ENCODE measurements at regions of chr3 and their contacts with region 1.

Region 1: GRCh38 chr3:79497447-79498111 is 270.2 kb downstream of the ROBO1 start:
- DNase-seq: no peak
- H3K4me3 ChIP-seq: no peak overlapping the region
- H3K27ac ChIP-seq: no peak overlapping the region
- H3K4me1 ChIP-seq: no peaks in the 10 kb centered on the region
- H3K27me3 ChIP-seq: no peaks in the 10 kb centered on the region
- CTCF ChIP-seq: peak; percentile 84

Region 2: DNA sequence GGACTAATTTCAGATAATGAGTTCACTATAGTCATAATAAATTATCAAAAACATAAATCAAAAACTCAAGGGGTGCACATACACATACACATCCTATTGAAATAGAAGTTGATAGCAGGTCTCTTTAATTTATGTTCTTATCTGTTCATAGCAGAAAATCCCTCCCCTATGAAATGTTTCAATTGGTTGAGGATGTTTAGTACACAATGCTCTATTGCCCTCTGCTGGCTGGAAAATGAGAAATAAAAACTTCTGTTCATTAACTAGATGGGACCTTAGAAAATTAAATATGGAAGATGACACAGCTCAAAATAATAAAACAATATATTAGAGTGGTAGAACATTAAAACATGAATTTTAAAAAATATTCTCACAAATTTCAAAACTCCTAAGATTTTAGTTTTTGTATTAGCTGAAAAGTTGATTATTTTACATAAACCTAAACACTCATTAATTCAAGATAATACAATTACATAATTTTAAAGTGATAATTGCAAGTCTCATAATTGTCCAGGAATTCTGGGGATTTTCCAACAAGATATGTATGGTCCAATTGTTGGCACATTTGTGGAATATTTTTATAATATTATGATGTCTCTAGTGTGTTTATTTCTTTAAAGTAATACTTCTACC is 464.8 kb before region 1 on chr3:
- CTCF ChIA-PET with region 1: no interaction called
- POLR2A ChIA-PET with region 1: no interaction called
- intact Hi-C with region 1: loop called (anchors 2 kb)
- DNase-seq: no peak
- H3K4me3 ChIP-seq: no peak overlapping the region
- H3K27ac ChIP-seq: no peak overlapping the region
- H3K4me1 ChIP-seq: no peaks in the 10 kb centered on the region
- H3K27me3 ChIP-seq: no peaks in the 10 kb centered on the region
- CTCF ChIP-seq: peak; percentile 81

Region 3: GRCh38 chr3:79339846-79340245 is 157.7 kb before region 1 on chr3:
- CTCF ChIA-PET with region 1: no interaction called
- POLR2A ChIA-PET with region 1: no interaction called
- intact Hi-C with region 1: no loop called
- DNase-seq: no peak
- H3K4me3 ChIP-seq: no peak overlapping the region
- H3K27ac ChIP-seq: no peak overlapping the region
- H3K4me1 ChIP-seq: no peaks in the 10 kb centered on the region
- H3K27me3 ChIP-seq: no peaks in the 10 kb centered on the region
- CTCF ChIP-seq: no peak

Region 4: DNA sequence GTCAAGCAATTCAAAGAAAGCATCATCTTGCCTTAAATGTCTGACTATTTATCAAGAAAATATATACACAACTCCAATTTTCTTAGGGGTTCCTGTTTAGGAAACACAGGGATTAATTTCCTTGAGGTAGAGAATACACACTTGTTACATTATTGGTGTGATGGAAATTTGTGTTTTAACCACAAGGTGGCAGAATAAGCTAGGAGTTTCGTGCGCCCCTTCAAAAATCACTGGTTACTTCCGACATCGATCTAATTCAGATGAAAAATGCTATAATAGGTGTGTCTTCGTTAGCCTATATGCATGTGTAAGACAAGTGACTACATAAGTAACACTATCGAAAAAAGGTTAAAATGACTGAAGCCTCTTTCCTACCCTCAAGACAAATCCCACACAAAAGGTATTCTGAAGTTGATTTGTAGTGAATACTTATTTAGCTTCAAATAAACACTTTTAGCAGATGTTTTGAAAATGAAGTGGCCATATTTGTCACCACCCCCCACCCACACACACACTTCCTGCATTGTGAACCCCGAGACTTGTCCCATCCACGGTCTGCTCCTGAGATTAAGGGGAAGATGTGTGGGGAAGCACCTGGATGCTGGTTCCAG is 23.8 kb after region 1 on chr3:
- CTCF ChIA-PET with region 1: no interaction called
- POLR2A ChIA-PET with region 1: no interaction called
- intact Hi-C with region 1: no loop called
- DNase-seq: peak; percentile 17 to 38
- H3K4me3 ChIP-seq: no peak overlapping the region; the same call in 1 of the 2 replicates
- H3K27ac ChIP-seq: no peak overlapping the region
- H3K4me1 ChIP-seq: no peaks in the 10 kb centered on the region
- H3K27me3 ChIP-seq: no peaks in the 10 kb centered on the region
- CTCF ChIP-seq: peak; percentile 79